ENCODE measurements at regions of chr19 and their contacts with region 1.

Region 1: GRCh38 chr19:36030264-36031148 is 2.2 kb downstream of the CLIP3 start:
- DNase-seq: no peak
- H3K27ac ChIP-seq: no peak overlapping the region
- CTCF ChIP-seq: no peak

Region 2: DNA sequence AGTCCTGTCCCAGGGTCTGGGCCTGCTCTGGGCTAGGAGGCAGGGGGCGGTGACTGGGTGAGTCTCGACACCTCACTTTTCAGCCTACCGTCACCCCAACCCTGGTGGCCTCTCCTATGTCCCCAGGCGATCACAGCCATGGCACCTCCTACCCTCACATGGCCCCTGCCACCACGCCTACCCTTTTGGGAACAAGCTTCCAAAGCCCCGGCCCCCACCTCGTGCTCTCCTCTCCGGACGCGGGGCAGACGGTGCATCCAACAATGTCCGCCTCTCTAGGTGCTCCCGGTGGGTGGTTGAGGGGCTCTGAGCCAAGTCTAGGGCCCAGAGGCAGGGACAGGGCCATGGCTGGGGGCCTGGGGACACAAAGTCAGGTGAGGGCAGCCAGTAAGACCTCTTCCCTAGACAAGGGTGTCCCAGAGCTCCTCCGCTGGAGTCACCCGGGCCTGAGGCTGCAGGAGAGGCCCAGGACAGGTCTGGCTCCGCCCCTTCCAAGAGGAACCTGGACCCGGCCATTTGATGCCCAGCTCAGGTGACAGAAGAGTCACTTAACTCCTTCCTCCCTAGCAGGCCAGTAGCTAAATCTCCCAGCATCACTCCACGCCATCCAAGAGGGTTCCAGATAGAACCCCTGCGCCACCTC is 22.0 kb before region 1 on chr19 and contains the start of gene SYNE4:
- CTCF ChIA-PET with region 1: no interaction called
- POLR2A ChIA-PET with region 1: interaction called, 12 read pairs
- DNase-seq: no peak
- H3K27ac ChIP-seq: peak within 1 kb of the TSS; percentile 65
- CTCF ChIP-seq: no peak